CD8-positive, alpha-beta T cell (primary cell): ENCODE measurements at regions of chr19 and their contacts with region 1.

Region 1: GRCh38 chr19:42028304-42029216 is 34.5 kb upstream of the ATP1A3 start:
- DNase-seq: peak in 3 of 9 experiments; percentile 18 to 27 (median 24)
- ATAC-seq: no peak
- H3K4me3 ChIP-seq: no peak overlapping the region
- H3K4me3 Mint-ChIP-seq: no peak overlapping the region
- H3K27ac ChIP-seq: no peak overlapping the region
- H3K27ac Mint-ChIP-seq: no peak overlapping the region
- H3K4me1 ChIP-seq: no peaks in the 10 kb centered on the region
- H3K4me1 Mint-ChIP-seq: no peaks in the 10 kb centered on the region
- H3K27me3 ChIP-seq: no peaks in the 10 kb centered on the region
- H3K27me3 Mint-ChIP-seq: peaks cover 22% of the 10 kb centered on the region
- CTCF ChIP-seq: no peak

Region 2: GRCh38 chr19:42038666-42039065 is 10.1 kb after region 1 on chr19:
- CTCF ChIA-PET with region 1: interaction called, 17 read pairs
- POLR2A ChIA-PET with region 1: no interaction called
- intact Hi-C with region 1: no loop called
- DNase-seq: no peak
- ATAC-seq: no peak
- H3K4me3 ChIP-seq: no peak overlapping the region
- H3K4me3 Mint-ChIP-seq: no peak overlapping the region
- H3K27ac ChIP-seq: no peak overlapping the region
- H3K27ac Mint-ChIP-seq: no peak overlapping the region
- H3K4me1 ChIP-seq: no peaks in the 10 kb centered on the region
- H3K4me1 Mint-ChIP-seq: peaks cover 5% of the 10 kb centered on the region
- H3K27me3 ChIP-seq: no peaks in the 10 kb centered on the region
- H3K27me3 Mint-ChIP-seq: no peaks in the 10 kb centered on the region
- CTCF ChIP-seq: no peak

Region 3: GRCh38 chr19:42066075-42066754 is 37.7 kb after region 1 on chr19:
- CTCF ChIA-PET with region 1: no interaction called
- POLR2A ChIA-PET with region 1: no interaction called
- intact Hi-C with region 1: no loop called
- DNase-seq: no peak
- ATAC-seq: no peak
- H3K4me3 ChIP-seq: no peak overlapping the region
- H3K4me3 Mint-ChIP-seq: no peak overlapping the region
- H3K27ac ChIP-seq: no peak overlapping the region
- H3K27ac Mint-ChIP-seq: no peak overlapping the region
- H3K4me1 ChIP-seq: no peaks in the 10 kb centered on the region
- H3K4me1 Mint-ChIP-seq: no peaks in the 10 kb centered on the region
- H3K27me3 ChIP-seq: peaks cover 4 to 18% of the 10 kb centered on the region in 2 experiments
- H3K27me3 Mint-ChIP-seq: peaks cover 10% of the 10 kb centered on the region
- CTCF ChIP-seq: no peak

Region 4: GRCh38 chr19:42088471-42089190 is 60.1 kb after region 1 on chr19:
- CTCF ChIA-PET with region 1: no interaction called
- POLR2A ChIA-PET with region 1: no interaction called
- intact Hi-C with region 1: no loop called
- DNase-seq: no peak
- ATAC-seq: no peak
- H3K4me3 ChIP-seq: no peak overlapping the region
- H3K4me3 Mint-ChIP-seq: no peak overlapping the region
- H3K27ac ChIP-seq: no peak overlapping the region
- H3K27ac Mint-ChIP-seq: no peak overlapping the region
- H3K4me1 ChIP-seq: peaks cover 5% of the 10 kb centered on the region
- H3K4me1 Mint-ChIP-seq: peaks cover 25% of the 10 kb centered on the region
- H3K27me3 ChIP-seq: no peaks in the 10 kb centered on the region
- H3K27me3 Mint-ChIP-seq: no peaks in the 10 kb centered on the region
- CTCF ChIP-seq: no peak